ENCODE measurements at regions of chr1 and their contacts with region 1.

Region 1: DNA sequence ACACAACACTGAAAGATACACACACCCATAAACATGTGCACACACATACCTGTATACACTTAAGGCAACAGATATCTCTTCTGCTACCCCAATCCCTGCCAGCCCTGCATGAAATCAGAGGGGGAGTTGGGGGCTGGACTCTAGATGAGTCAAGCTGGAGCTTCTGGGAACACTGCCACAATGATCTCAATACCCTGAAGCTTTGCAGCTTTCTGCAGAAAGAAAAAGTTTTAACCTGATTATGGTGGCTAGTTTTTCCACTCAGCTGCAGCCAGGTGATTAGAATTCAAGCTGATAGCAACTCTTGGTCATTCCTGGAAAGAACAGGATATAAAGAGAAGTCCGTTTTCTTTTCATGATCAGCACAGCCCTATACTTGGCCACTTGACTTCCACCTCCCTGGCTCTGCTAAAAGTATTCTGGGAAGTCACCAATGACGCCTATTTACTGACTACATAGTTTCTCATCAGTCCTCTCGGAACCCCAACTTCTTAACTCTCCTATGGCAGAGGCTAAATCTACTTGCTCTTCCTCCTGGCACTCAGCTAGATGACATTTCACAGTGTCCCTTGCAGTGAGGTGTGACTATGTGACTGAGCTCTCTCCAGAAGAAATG is 20.7 kb upstream of the DNASE2B start:
- DNase-seq: peak; percentile 92
- ATAC-seq: peak; percentile 71
- H3K4me3 ChIP-seq: no peak overlapping the region
- H3K27ac ChIP-seq: no peak overlapping the region
- H3K4me1 ChIP-seq: peaks cover 20% of the 10 kb centered on the region
- H3K27me3 ChIP-seq: no peaks in the 10 kb centered on the region
- CTCF ChIP-seq: no peak
- POLR2A ChIP-seq: no peak
- RAD21 ChIP-seq: no peak

Region 2: DNA sequence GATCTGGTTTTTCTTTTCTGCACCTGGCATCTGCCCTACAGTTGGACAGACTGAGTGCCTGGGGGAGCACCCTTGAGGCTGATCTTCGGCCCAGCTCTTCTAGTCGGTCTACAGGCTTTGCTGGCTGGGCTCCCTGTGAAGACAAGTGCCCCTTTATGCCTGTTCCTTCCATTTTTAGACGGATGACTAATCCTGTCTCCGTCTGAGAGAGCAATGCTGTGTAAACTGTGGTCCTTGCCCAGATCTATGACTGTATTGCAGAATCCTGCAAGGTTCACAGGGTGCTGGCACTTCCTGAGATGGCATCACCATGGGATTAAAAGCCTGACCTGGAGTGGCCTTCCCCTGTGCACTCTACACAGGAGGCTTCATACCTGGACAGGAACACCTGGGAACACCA is 123.7 kb before region 1 on chr1:
- CTCF ChIA-PET with region 1: no interaction called
- POLR2A ChIA-PET with region 1: no interaction called
- dilution Hi-C with region 1: no loop called
- in situ Hi-C with region 1: no loop called
- intact Hi-C with region 1: loop called (anchors 5 kb)
- DNase-seq: peak; percentile 97
- ATAC-seq: peak; percentile 90
- H3K4me3 ChIP-seq: no peak overlapping the region
- H3K27ac ChIP-seq: no peak overlapping the region
- H3K4me1 ChIP-seq: peaks cover 5% of the 10 kb centered on the region; the same call in 1 of the 2 replicates
- H3K27me3 ChIP-seq: no peaks in the 10 kb centered on the region
- CTCF ChIP-seq: no peak
- POLR2A ChIP-seq: peak; percentile 41; the same call in 1 of the 2 replicates
- RAD21 ChIP-seq: no peak; the same call in 1 of the 2 replicates

Region 3: GRCh38 chr1:84353695-84354094 is 23.9 kb before region 1 on chr1:
- CTCF ChIA-PET with region 1: no interaction called
- POLR2A ChIA-PET with region 1: no interaction called
- dilution Hi-C with region 1: no loop called
- in situ Hi-C with region 1: no loop called
- intact Hi-C with region 1: no loop called
- DNase-seq: peak; percentile 69
- ATAC-seq: peak; percentile 65
- H3K4me3 ChIP-seq: no peak overlapping the region
- H3K27ac ChIP-seq: no peak overlapping the region
- H3K4me1 ChIP-seq: peaks cover 4% of the 10 kb centered on the region
- H3K27me3 ChIP-seq: no peaks in the 10 kb centered on the region
- CTCF ChIP-seq: no peak
- POLR2A ChIP-seq: no peak
- RAD21 ChIP-seq: no peak

Region 4: DNA sequence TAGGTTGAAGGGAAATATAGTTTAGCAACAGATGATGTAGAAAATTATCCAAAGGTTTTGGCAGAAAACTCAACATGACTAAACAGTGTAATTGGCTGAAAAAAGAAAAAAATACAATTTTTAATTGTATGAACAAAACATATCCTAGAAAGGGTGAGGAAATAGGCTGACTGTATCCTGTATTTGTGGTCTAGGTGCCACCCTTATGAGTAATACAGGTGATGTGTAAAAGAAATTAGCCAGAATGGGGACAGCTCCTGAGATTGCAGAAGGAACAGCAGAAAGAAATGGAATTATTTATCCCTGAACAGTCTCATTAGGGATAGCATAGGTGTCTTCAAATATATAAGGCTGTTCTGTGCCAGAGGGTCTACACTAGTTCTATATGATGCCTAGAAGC is 45.3 kb after region 1 on chr1:
- CTCF ChIA-PET with region 1: no interaction called
- POLR2A ChIA-PET with region 1: no interaction called
- dilution Hi-C with region 1: no loop called
- in situ Hi-C with region 1: no loop called
- intact Hi-C with region 1: no loop called
- DNase-seq: no peak
- ATAC-seq: no peak
- H3K4me3 ChIP-seq: no peak overlapping the region
- H3K27ac ChIP-seq: no peak overlapping the region
- H3K4me1 ChIP-seq: peaks cover 1% of the 10 kb centered on the region; the same call in 1 of the 2 replicates
- H3K27me3 ChIP-seq: no peaks in the 10 kb centered on the region
- CTCF ChIP-seq: no peak
- POLR2A ChIP-seq: no peak
- RAD21 ChIP-seq: no peak